IMR-90 (cell line): ENCODE measurements at regions of chr19 and their contacts with region 1.

Region 1: GRCh38 chr19:35269421-35270117 is 807 bp downstream of the USF2 start:
- DNase-seq: peak; percentile 75
- ATAC-seq: peak; percentile 62
- H3K4me3 ChIP-seq: peak overlapping the region; percentile 73
- H3K27ac ChIP-seq: peak overlapping the region; percentile 78
- H3K4me1 ChIP-seq: peaks cover 7% of the 10 kb centered on the region
- H3K27me3 ChIP-seq: no peaks in the 10 kb centered on the region
- CTCF ChIP-seq: peak; percentile 56
- POLR2A ChIP-seq: no peak
- RAD21 ChIP-seq: peak; percentile 48

Region 2: GRCh38 chr19:35140962-35141637 is 128.5 kb before region 1 on chr19:
- CTCF ChIA-PET with region 1: no interaction called
- POLR2A ChIA-PET with region 1: no interaction called
- dilution Hi-C with region 1: no loop called
- in situ Hi-C with region 1: no loop called
- intact Hi-C with region 1: loop called (anchors 5 kb)
- DNase-seq: peak; percentile 86
- ATAC-seq: peak; percentile 87
- H3K4me3 ChIP-seq: no peak overlapping the region
- H3K27ac ChIP-seq: no peak overlapping the region
- H3K4me1 ChIP-seq: peaks cover 18% of the 10 kb centered on the region
- H3K27me3 ChIP-seq: peaks cover 33% of the 10 kb centered on the region
- CTCF ChIP-seq: peak; percentile 55
- POLR2A ChIP-seq: no peak
- RAD21 ChIP-seq: peak; percentile 46